IMR-90 (cell line): ENCODE measurements at regions of chr6 and their contacts with region 1.

Region 1: GRCh38 chr6:42166444-42167141 is 6.6 kb upstream of the GUCA1A start:
- DNase-seq: peak; percentile 55
- ATAC-seq: peak; percentile 89
- H3K4me3 ChIP-seq: no peak overlapping the region
- H3K27ac ChIP-seq: no peak overlapping the region
- H3K4me1 ChIP-seq: peaks cover 9% of the 10 kb centered on the region
- H3K27me3 ChIP-seq: no peaks in the 10 kb centered on the region
- CTCF ChIP-seq: peak; percentile 94
- POLR2A ChIP-seq: peak; percentile 50; the same call in 1 of the 2 replicates
- RAD21 ChIP-seq: peak; percentile 97

Region 2: GRCh38 chr6:42217519-42218367 is 51.1 kb after region 1 on chr6 and contains the start of gene MRPS10:
- CTCF ChIA-PET with region 1: interaction called, 15 read pairs
- POLR2A ChIA-PET with region 1: no interaction called
- dilution Hi-C with region 1: no loop called
- in situ Hi-C with region 1: no loop called
- intact Hi-C with region 1: loop called (anchors 1 kb)
- DNase-seq: peak; percentile 94
- ATAC-seq: peak; percentile 98
- H3K4me3 ChIP-seq: peak within 1 kb of the TSS; percentile 82
- H3K27ac ChIP-seq: peak within 1 kb of the TSS; percentile 83
- H3K4me1 ChIP-seq: peaks cover 2% of the 10 kb centered on the region; the same call in 1 of the 2 replicates
- H3K27me3 ChIP-seq: no peaks in the 10 kb centered on the region
- CTCF ChIP-seq: no peak
- POLR2A ChIP-seq: peak; percentile 85
- RAD21 ChIP-seq: no peak
- total RNA-seq, gene MRPS10: 47.0 and 71.1 TPM in 2 replicates

Region 3: GRCh38 chr6:42338663-42339218 is 172.1 kb after region 1 on chr6:
- CTCF ChIA-PET with region 1: no interaction called
- POLR2A ChIA-PET with region 1: no interaction called
- dilution Hi-C with region 1: no loop called
- in situ Hi-C with region 1: no loop called
- intact Hi-C with region 1: no loop called
- DNase-seq: peak; percentile 99
- ATAC-seq: peak; percentile 95
- H3K4me3 ChIP-seq: no peak overlapping the region; the same call in 1 of the 2 replicates
- H3K27ac ChIP-seq: peak overlapping the region; percentile 58
- H3K4me1 ChIP-seq: peaks cover 17% of the 10 kb centered on the region
- H3K27me3 ChIP-seq: no peaks in the 10 kb centered on the region
- CTCF ChIP-seq: peak; percentile 28; the same call in 1 of the 2 replicates
- POLR2A ChIP-seq: peak; percentile 52; the same call in 1 of the 2 replicates
- RAD21 ChIP-seq: peak; percentile 39; the same call in 1 of the 2 replicates